ENCODE measurements at regions of chr16 and their contacts with region 1.

Region 1: DNA sequence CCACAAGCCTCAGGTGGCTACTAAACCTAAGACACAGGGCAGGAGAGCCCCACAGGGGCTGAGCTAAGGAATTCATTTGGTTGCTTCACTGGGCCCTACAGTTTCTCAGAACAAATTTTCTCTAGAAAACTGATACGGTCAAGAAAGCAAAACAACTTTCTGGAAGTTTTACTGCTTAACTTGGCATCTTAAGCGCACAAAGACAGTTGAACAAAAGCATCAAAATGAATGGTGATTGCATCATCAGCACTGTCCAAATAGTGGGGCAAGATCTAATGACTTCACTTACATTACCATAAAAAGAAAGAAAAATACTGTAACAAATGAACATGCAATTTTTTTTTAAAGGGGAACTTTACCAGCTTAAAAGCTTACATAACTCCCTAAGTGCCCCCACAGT is 47.6 kb downstream of the XPO6 start:
- DNase-seq: no peak
- ATAC-seq: no peak
- H3K4me3 ChIP-seq: no peak overlapping the region
- H3K4me3 Mint-ChIP-seq: no peak overlapping the region
- H3K27ac ChIP-seq: peak overlapping the region in 1 of 2 experiments; percentile 9
- H3K27ac Mint-ChIP-seq: peak overlapping the region; percentile 89
- H3K4me1 ChIP-seq: peaks cover 82% of the 10 kb centered on the region
- H3K4me1 Mint-ChIP-seq: peaks cover 87% of the 10 kb centered on the region
- H3K27me3 ChIP-seq: no peaks in the 10 kb centered on the region
- H3K27me3 Mint-ChIP-seq: no peaks in the 10 kb centered on the region
- CTCF ChIP-seq: no peak

Region 2: GRCh38 chr16:28149011-28149888 is 14.9 kb before region 1 on chr16:
- CTCF ChIA-PET with region 1: interaction called, 30 read pairs
- POLR2A ChIA-PET with region 1: interaction called, 6 read pairs
- intact Hi-C with region 1: loop called (anchors 1 to 2 kb)
- DNase-seq: peak in 6 of 9 experiments; percentile 42 to 69 (median 50)
- ATAC-seq: peak; percentile 82
- H3K4me3 ChIP-seq: no peak overlapping the region
- H3K4me3 Mint-ChIP-seq: peak overlapping the region; percentile 38
- H3K27ac ChIP-seq: peak overlapping the region; percentile 25 to 55
- H3K27ac Mint-ChIP-seq: peak overlapping the region; percentile 90
- H3K4me1 ChIP-seq: peaks cover 67% of the 10 kb centered on the region
- H3K4me1 Mint-ChIP-seq: peaks cover 85% of the 10 kb centered on the region
- H3K27me3 ChIP-seq: no peaks in the 10 kb centered on the region
- H3K27me3 Mint-ChIP-seq: no peaks in the 10 kb centered on the region
- CTCF ChIP-seq: peak; percentile 22

Region 3: DNA sequence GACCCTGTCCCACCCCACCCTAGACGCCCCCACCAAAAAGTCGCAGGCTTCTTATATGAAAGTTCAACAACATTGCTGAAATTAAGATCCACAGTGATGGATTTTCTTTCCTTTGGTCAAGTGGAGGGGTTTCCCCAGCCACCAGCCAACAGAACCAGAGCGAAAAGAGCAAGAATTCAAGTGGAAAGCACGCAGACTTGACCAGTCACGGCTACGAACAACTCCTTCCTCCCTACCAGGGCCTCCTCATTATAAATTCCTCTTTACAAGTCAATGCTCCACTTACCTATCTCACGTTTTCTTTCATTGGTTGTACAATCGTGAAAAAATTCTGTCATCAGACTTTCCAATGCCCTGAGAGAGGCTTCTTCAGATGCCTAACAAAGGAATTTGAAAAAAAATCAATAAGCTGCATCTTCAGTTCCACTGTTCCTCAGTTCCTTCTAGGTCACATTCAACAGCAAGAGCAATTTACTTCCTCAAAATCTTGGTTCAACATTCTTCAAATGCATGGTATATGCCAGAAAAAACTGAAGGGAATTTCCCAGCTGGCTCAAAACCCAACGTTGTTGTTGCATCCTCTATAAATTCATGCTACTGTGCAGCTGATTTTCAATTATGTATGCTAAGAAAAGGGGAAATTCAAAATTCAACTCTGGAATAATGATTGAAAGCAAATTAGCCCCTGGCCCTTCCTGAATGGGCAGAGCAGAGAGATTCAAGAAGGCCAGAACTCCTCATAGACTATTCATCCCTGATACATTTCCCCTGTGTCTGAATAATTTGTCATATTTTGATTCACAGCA is 16.7 kb after region 1 on chr16:
- CTCF ChIA-PET with region 1: interaction called, 4 read pairs
- POLR2A ChIA-PET with region 1: interaction called, 5 read pairs
- intact Hi-C with region 1: loop called in 1 of 2 experiments (anchors 1 kb)
- DNase-seq: peak in 1 of 9 experiments; percentile 65
- ATAC-seq: no peak
- H3K4me3 ChIP-seq: no peak overlapping the region
- H3K4me3 Mint-ChIP-seq: peak overlapping the region; percentile 44
- H3K27ac ChIP-seq: peak overlapping the region in 1 of 2 experiments; percentile 35
- H3K27ac Mint-ChIP-seq: peak overlapping the region; percentile 87
- H3K4me1 ChIP-seq: peaks cover 66% of the 10 kb centered on the region
- H3K4me1 Mint-ChIP-seq: peaks cover 83% of the 10 kb centered on the region
- H3K27me3 ChIP-seq: no peaks in the 10 kb centered on the region
- H3K27me3 Mint-ChIP-seq: no peaks in the 10 kb centered on the region
- CTCF ChIP-seq: no peak

Region 4: GRCh38 chr16:28193530-28194423 is 29.6 kb after region 1 on chr16:
- CTCF ChIA-PET with region 1: interaction called, 3 read pairs
- POLR2A ChIA-PET with region 1: interaction called, 4 read pairs
- intact Hi-C with region 1: loop called (anchors 1 to 2 kb)
- DNase-seq: peak in 5 of 9 experiments; percentile 42 to 75 (median 57)
- ATAC-seq: no peak
- H3K4me3 ChIP-seq: peak overlapping the region; percentile 18 to 40
- H3K4me3 Mint-ChIP-seq: peak overlapping the region; percentile 81
- H3K27ac ChIP-seq: peak overlapping the region; percentile 61 to 86
- H3K27ac Mint-ChIP-seq: peak overlapping the region; percentile 98
- H3K4me1 ChIP-seq: peaks cover 80% of the 10 kb centered on the region
- H3K4me1 Mint-ChIP-seq: peaks cover 80% of the 10 kb centered on the region
- H3K27me3 ChIP-seq: no peaks in the 10 kb centered on the region
- H3K27me3 Mint-ChIP-seq: no peaks in the 10 kb centered on the region
- CTCF ChIP-seq: no peak